A673 (cell line): ENCODE measurements at regions of chr19 and their contacts with region 1.

Region 1: GRCh38 chr19:16324384-16325160 is at the start of gene KLF2:
- DNase-seq: peak; percentile 82
- H3K4me3 ChIP-seq: peak within 1 kb of the TSS; percentile 61
- H3K27ac ChIP-seq: peak within 1 kb of the TSS; percentile 65
- H3K4me1 ChIP-seq: no peaks in the 10 kb centered on the region
- H3K27me3 ChIP-seq: peaks cover 6% of the 10 kb centered on the region
- CTCF ChIP-seq: no peak
- total RNA-seq, gene KLF2: 1.9 and 2.1 TPM in 2 replicates

Region 2: GRCh38 chr19:16076958-16077611 is 247.5 kb before region 1 on chr19:
- CTCF ChIA-PET with region 1: no interaction called
- POLR2A ChIA-PET with region 1: interaction called, 18 read pairs
- intact Hi-C with region 1: no loop called
- DNase-seq: peak; percentile 72
- H3K4me3 ChIP-seq: peak overlapping the region; percentile 93
- H3K27ac ChIP-seq: peak overlapping the region; percentile 100
- H3K4me1 ChIP-seq: peaks cover 20% of the 10 kb centered on the region
- H3K27me3 ChIP-seq: no peaks in the 10 kb centered on the region
- CTCF ChIP-seq: no peak

Region 3: DNA sequence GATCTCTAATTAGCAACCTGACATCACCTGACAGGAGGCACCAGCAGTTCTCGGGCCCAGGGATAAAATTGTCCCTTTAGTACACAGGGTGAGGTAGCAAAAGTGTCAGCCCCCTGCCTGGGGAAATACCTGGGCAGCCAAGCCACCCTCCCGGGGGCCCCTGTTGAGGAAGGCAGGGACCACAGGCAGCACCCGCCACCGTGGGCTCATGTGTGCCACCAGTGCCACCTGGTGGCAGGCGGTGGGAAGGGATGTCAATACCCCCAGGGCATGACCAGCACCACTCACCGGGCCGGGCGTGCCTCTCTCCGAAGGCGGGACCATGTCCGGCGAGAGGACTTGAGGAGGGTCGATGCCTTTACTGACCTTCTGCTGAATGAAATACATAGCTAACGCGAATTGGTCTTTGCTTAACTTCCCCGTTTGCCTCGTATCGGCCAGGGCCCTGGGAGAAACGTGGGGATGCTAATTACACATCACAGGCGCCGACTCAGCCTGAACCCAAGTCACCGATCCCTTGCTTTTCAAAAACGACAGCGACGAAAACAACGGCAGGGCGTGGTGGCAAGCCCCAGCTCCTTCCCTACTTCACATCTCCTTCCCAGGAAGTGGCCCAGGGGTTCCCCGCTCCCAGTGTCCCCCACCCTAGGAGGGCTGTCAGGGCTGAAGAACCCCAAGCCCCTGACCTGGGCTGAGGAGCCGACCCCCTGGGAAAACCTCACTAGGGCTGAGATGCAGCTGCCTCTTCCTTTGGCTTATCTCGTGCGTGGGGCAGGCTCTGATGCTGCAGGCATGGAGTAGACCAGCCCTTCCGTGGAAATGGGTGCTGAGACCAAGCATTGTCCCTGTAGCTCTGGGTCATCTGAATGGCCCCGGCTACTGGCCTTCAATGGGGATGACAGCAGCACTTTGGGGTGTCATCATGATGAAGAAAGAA is 93.4 kb after region 1 on chr19:
- CTCF ChIA-PET with region 1: no interaction called
- POLR2A ChIA-PET with region 1: no interaction called
- intact Hi-C with region 1: no loop called
- DNase-seq: peak; percentile 70
- H3K4me3 ChIP-seq: no peak overlapping the region
- H3K27ac ChIP-seq: no peak overlapping the region
- H3K4me1 ChIP-seq: no peaks in the 10 kb centered on the region
- H3K27me3 ChIP-seq: no peaks in the 10 kb centered on the region
- CTCF ChIP-seq: peak; percentile 88

Region 4: DNA sequence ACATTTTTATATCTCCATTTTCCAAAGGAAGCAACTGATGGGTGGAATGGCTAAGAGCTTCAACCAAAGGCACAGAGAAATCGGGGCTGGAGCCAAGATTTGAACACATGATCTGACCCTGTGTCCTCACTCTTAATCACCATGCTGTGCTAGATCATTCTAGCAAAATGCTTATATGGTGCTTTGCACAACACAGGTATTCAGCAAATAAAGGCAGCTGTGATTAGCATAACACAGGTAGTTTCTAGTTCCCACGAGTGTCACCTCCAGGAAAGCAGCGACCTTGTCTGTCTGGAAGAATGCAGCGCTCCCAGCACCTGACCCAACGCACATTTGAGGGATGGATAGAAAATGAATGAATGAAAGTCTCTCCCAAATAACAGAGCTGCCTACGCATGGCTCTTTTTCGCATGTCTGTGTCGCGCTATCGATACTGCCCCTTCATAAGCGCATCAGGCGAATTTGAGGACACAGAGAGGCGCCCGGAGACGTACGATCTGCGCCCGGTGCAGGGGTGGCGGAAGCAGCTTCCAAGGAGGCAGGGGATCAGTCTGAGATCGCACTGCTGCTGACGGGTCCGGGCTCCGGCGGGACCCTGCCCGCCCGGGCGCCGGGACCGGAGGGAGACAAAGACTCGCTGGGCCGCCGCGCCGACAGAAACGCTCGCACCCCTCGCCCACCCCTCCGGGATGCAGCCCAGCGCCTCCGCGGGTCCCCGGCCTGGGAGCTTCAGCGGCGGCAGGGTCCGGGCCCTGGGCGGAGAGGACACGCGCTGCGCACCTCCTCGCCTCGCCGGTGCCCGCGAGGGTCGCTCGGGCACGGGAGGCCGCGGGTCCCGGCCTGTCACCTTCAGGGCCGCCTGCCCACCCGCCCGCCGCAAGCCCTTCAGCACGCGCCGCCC is 146.6 kb after region 1 on chr19:
- CTCF ChIA-PET with region 1: no interaction called
- POLR2A ChIA-PET with region 1: no interaction called
- intact Hi-C with region 1: no loop called
- DNase-seq: peak; percentile 43
- H3K4me3 ChIP-seq: peak overlapping the region; percentile 75
- H3K27ac ChIP-seq: peak overlapping the region; percentile 73
- H3K4me1 ChIP-seq: peaks cover 12% of the 10 kb centered on the region
- H3K27me3 ChIP-seq: no peaks in the 10 kb centered on the region
- CTCF ChIP-seq: no peak